Activated CD4-positive, alpha-beta memory T cell treated with anti-CD3 and anti-CD28 coated beads for 36 hours (primary cell): ENCODE measurements at regions of chr4 and their contacts with region 1.

Region 1: DNA sequence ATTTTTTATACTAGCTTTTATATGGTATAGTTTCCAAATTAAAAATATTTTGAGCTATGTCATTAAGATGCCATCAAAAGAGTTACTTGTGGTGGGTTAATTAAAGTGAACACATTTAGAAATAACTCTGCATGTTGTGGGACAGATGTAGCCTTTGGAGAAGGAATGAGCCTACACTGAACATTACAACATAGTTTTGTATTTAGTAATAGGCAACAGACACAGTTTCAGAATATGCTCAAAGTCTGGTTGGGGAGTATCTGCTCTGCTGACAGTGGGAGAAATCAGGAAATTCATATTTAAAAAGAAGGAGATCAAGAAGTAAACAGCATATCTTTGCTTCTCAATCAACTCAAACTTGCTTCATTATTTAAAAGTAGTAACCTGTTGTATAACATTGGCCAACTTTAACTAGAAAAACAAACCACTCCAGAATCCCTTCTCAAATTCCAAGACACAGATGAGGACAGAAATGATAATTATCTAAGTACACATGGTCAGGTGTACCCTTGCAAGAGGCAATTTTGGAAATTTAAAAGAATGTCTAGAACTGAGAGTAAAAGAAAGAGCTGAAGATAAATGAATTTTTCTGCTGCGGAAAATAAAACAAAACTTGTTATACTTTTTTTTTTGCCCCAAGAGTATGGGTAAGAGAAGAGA is 23.5 kb downstream of the EMCN start:
- DNase-seq: no peak
- H3K4me3 Mint-ChIP-seq: no peak overlapping the region
- H3K27ac Mint-ChIP-seq: no peak overlapping the region
- H3K4me1 Mint-ChIP-seq: no peaks in the 10 kb centered on the region
- H3K27me3 Mint-ChIP-seq: no peaks in the 10 kb centered on the region

Region 2: GRCh38 chr4:100479971-100480370 is 14.3 kb before region 1 on chr4:
- CTCF ChIA-PET with region 1: no interaction called
- POLR2A ChIA-PET with region 1: no interaction called
- intact Hi-C with region 1: no loop called
- DNase-seq: no peak
- H3K4me3 Mint-ChIP-seq: no peak overlapping the region
- H3K27ac Mint-ChIP-seq: no peak overlapping the region
- H3K4me1 Mint-ChIP-seq: no peaks in the 10 kb centered on the region
- H3K27me3 Mint-ChIP-seq: no peaks in the 10 kb centered on the region

Region 3: DNA sequence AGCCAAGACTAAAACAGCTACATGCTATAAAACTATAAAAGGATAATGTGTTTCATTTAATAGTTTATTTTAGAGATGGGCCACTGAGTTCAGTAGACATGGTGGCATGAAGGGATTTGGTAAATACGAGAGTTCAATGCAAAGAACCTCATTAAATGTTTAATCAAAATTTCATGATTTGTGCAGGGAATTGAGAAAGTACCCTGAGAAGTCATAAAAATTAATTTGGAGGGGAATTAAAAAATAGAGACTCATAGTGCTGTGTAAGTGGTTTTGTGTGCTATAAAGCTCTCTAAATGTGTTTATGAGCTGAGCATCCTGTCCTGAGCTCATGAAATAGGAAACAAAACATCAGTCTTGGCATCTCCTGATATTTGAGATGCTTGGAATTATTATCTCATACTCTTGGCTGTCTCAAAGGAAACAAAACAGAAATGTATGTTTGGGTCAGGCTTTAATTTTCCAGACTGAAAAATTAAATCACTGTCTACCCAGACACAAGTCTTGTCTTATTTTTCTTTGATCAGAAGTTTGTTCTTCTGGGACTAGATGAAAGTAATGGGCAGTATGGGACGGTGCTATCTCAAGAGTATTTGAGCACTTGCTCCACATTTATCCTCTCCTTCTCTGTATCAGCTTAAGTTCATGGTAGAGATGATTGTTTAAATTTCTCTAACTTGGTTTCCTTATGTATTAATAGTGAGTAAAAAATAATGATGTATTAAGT is 61.5 kb after region 1 on chr4:
- CTCF ChIA-PET with region 1: no interaction called
- POLR2A ChIA-PET with region 1: no interaction called
- intact Hi-C with region 1: loop called (anchors 10 kb)
- DNase-seq: no peak
- H3K4me3 Mint-ChIP-seq: no peak overlapping the region
- H3K27ac Mint-ChIP-seq: no peak overlapping the region
- H3K4me1 Mint-ChIP-seq: no peaks in the 10 kb centered on the region
- H3K27me3 Mint-ChIP-seq: peaks cover 9% of the 10 kb centered on the region